ENCODE measurements at regions of chr2 and their contacts with region 1.

Region 1: GRCh38 chr2:1591978-1592907 is 152.1 kb downstream of the PXDN start:
- DNase-seq: peak; percentile 76 to 81
- ATAC-seq: peak; percentile 73 to 87 (median 84)
- H3K4me3 ChIP-seq: peak overlapping the region in 6 of 10 donors; percentile 27 to 41 (median 31)
- H3K27ac ChIP-seq: peak overlapping the region; percentile 2 to 84 (median 62)
- H3K4me1 ChIP-seq: peaks cover 5 to 54% (median 41%) of the 10 kb centered on the region in 9 donors
- H3K27me3 ChIP-seq: peaks cover 0 to 16% (median 0%) of the 10 kb centered on the region in 7 donors
- CTCF ChIP-seq: peak; percentile 45 to 84 (median 69)

Region 2: DNA sequence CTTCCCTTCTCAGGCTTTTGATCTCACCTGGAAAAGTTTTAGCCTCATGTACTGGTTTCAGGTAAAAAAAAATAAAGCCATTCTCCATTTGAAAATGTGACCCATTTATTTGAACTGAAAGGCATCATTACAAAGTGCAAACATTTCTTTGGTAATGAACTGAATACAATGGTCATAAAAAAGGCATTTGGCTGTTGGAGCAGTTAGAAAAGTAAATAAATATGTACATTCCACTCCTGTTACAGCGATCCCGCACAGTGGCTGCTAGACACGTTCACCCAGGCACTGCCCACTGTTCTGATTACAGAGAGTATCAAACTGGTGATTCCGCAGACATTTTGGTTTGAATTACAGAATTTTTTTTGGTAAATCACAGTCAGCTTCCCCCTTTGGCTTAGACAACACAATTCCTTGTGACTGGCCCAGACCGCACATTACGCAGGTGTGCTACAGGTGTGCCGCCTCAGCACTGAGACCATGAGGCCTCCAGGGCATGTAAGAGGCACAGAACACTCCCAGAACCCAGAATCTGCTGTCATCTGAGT is 39.6 kb after region 1 on chr2:
- intact Hi-C with region 1: loop called in 1 of 10 experiments (anchors 5 kb)
- DNase-seq: no peak
- ATAC-seq: no peak
- H3K4me3 ChIP-seq: no peak overlapping the region
- H3K27ac ChIP-seq: peak overlapping the region in 3 of 10 donors; percentile 2 to 38 (median 7)
- H3K4me1 ChIP-seq: peaks cover 0 to 23% (median 5%) of the 10 kb centered on the region in 9 donors
- H3K27me3 ChIP-seq: peaks cover 0 to 5% (median 0%) of the 10 kb centered on the region in 7 donors
- CTCF ChIP-seq: no peak

Region 3: DNA sequence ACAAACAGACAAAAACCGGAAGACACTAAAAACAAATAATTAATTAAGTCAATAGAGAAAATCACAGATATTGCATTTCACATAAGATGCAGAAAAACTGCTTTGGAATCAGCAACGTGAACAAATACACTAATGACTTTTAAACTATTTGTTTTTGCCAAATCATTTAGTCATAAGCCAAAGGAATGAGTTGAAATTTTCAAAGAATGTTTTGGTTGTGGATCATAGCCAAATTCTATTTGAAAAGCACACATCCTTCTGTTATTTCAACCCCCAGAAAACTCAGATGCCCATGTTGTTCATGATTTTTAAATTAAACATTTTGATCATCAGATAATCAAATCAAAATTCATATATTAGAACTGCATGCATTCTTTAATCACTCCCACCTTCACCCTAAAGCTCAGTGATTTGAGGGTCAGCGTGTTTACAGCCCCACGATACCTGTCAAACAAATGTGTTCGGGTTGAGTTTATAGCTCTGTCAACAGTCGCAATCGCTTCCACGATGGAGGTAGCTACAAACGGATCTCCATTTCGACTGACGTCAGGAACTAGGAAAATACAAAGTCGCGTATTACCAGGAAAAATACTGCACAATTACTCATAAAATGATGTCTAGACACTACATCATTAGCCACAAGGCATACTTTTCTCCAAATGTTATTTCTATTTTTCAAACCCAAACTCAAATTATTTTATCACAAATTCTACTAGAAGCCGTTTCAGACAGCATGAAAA is 61.9 kb after region 1 on chr2:
- intact Hi-C with region 1: loop called in 2 of 10 experiments (anchors 5 kb)
- DNase-seq: no peak
- ATAC-seq: peak in 3 of 8 donors; percentile 8 to 41 (median 15)
- H3K4me3 ChIP-seq: no peak overlapping the region
- H3K27ac ChIP-seq: peak overlapping the region in 9 of 10 donors; percentile 40 to 88 (median 72)
- H3K4me1 ChIP-seq: peaks cover 8 to 50% (median 26%) of the 10 kb centered on the region in 9 donors
- H3K27me3 ChIP-seq: peaks cover 0 to 10% (median 0%) of the 10 kb centered on the region in 7 donors
- CTCF ChIP-seq: no peak

Region 4: GRCh38 chr2:1750933-1751766 is 158.9 kb after region 1 on chr2:
- intact Hi-C with region 1: loop called in 5 of 10 experiments (anchors 5 to 10 kb)
- DNase-seq: peak; percentile 66 to 67
- ATAC-seq: peak; percentile 71 to 86 (median 78)
- H3K4me3 ChIP-seq: no peak overlapping the region
- H3K27ac ChIP-seq: no peak overlapping the region
- H3K4me1 ChIP-seq: peaks cover 0 to 20% (median 6%) of the 10 kb centered on the region in 9 donors
- H3K27me3 ChIP-seq: peaks cover 0 to 26% (median 16%) of the 10 kb centered on the region in 7 donors
- CTCF ChIP-seq: peak; percentile 76 to 89 (median 84)

Region 5: DNA sequence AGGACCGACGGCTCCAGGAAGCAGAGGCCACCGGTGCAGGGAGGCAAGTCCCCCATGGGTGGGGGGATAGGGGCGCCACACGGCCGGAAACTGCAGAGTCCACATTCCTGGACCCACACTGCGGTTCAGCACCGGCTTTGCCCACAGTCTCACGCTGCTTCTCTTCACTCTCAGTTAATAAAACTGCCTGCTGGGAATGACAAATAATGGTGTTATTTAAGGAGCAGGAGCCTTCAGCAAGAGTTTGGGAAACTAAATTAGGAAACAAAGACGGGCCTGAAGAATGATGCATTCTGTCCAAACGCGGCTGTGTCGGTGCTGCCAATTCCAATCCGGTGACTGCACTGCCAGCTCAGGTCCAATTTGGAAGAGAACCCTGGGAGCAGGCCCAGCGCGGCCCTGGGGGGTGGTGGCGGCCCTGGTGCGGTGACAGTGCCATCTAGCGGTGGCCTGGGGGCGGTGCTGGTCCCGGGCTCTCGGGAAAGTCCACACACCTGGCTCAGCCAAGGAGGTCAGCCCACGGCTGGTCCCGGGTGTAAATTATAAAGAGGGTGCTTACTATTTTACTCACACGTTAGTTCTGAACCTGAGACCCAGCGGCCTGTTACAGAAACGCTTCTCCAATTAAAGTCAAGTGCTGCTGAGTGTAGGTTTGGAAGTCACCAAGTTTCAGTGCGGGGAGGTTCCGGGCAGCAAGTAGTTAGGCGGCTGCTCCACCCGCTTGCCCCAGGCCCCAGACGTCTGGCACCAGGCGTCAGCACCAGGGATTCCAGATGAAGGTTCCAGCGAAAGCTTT is 225.2 kb after region 1 on chr2:
- intact Hi-C with region 1: loop called in 1 of 10 experiments (anchors 2 kb)
- DNase-seq: peak; percentile 86 to 89
- ATAC-seq: peak; percentile 92 to 97 (median 94)
- H3K4me3 ChIP-seq: peak overlapping the region in 2 of 10 donors; percentile 7 to 10
- H3K27ac ChIP-seq: peak overlapping the region; percentile 3 to 89 (median 83)
- H3K4me1 ChIP-seq: peaks cover 8 to 26% (median 13%) of the 10 kb centered on the region in 9 donors
- H3K27me3 ChIP-seq: peaks cover 0 to 8% (median 0%) of the 10 kb centered on the region in 7 donors
- CTCF ChIP-seq: peak; percentile 95 to 99 (median 98)

Measured in heart right ventricle (tissue), 16 donors.